H1 (cell line): ENCODE measurements at regions of chr7 and their contacts with region 1.

Region 1: DNA sequence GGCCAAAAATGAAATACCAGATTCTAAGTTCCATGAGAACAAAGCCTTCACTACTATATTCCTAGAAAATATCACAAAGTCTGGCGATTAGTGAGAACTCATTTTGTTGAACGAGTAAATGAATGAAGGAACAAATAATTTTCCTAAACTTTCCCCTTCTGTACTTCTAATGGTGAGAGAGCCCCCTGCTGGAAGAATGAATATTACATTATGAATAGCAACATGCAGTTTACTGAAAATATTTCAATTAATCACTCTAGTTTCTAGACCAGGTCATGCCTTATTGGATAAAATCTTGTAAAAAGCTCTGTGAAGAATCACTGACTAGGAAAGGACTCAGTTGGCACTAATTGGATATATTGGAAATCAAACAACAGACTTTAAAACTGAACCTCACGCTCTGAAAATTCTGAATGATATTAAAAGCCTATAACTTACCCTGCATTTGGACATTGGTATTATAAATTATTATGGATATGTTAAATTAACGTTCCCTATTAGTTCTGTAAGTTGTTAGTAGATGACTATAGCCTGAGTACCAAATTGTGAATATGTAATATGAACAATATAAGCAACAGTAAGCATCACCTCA is 32.4 kb upstream of the MTPN start:
- DNase-seq: no peak
- H3K4me3 ChIP-seq: no peak overlapping the region
- H3K27ac ChIP-seq: no peak overlapping the region
- H3K4me1 ChIP-seq: no peaks in the 10 kb centered on the region
- H3K27me3 ChIP-seq: no peaks in the 10 kb centered on the region
- CTCF ChIP-seq: peak in 2 of 3 experiments; percentile 27 to 46; a peak in 2 of 4 replicates
- EP300 ChIP-seq: no peak
- POLR2A ChIP-seq: no peak
- RAD21 ChIP-seq: peak; percentile 62 to 64

Region 2: DNA sequence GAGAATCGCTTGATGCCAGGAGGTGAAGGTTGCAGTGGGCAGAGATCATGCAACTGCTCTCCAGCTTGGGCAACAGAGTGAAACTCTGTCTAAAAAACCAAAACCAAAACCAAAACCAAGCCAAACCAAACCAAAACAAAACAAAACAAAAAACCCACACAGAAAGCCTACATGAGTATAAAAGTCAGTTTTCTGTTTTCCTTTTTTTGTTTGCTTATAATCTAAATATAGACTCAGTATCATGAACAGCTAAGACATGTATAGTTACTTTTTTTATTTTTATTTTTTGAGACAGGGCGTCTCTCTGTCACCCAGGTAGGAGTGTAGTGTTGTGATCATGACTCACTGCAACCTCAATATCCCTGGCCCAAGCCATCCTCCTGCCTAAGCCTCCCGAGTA is 15.6 kb before region 1 on chr7:
- CTCF ChIA-PET with region 1: interaction called, 33 read pairs
- POLR2A ChIA-PET with region 1: no interaction called
- DNase-seq: no peak
- H3K4me3 ChIP-seq: no peak overlapping the region
- H3K27ac ChIP-seq: no peak overlapping the region
- H3K4me1 ChIP-seq: no peaks in the 10 kb centered on the region
- H3K27me3 ChIP-seq: no peaks in the 10 kb centered on the region
- CTCF ChIP-seq: no peak
- EP300 ChIP-seq: no peak
- POLR2A ChIP-seq: no peak
- RAD21 ChIP-seq: no peak

Region 3: DNA sequence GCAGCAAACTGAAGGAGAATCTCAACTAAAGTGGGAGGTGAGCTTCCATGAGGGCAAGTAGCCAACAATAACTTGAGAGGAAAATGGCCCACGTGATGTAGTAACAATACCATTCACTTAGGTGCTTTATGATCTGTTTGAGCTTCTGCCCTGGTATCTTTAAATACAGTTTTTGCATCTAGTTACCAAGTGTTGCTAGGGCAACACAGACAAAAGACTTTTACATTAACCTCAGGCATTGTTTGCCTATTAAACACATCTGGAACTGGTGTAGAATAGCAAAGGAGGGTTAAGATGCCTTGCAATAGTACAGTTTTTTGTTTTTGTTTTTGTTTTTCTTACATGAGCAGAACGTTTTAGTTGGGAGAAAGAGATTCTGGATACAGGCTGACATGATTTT is 65.2 kb after region 1 on chr7:
- CTCF ChIA-PET with region 1: no interaction called
- POLR2A ChIA-PET with region 1: no interaction called
- DNase-seq: no peak
- H3K4me3 ChIP-seq: no peak overlapping the region
- H3K27ac ChIP-seq: no peak overlapping the region
- H3K4me1 ChIP-seq: no peaks in the 10 kb centered on the region
- H3K27me3 ChIP-seq: no peaks in the 10 kb centered on the region
- CTCF ChIP-seq: no peak
- EP300 ChIP-seq: no peak
- POLR2A ChIP-seq: no peak
- RAD21 ChIP-seq: no peak